ENCODE measurements at regions of chr1 and their contacts with region 1.

Region 1: DNA sequence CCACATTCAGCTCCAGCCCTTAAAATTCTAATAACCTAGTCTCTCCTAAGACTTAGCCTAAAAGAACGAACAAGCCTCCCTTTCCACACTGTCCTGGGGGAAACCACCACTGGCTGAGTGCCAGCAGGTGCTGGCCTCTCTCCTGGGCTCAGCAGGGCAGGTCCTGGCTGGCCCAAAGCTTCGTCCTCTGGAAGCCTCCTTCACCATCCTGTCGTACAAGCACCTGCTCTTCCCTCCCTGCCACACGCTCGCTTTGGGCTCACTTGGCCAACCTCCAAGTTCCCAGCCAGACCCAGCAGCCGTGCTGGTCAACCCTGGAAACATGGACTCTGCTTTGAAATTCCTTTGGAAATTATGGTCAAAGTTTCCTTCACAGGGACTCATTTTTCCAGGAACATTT is 58.2 kb upstream of the SLC25A33 start:
- DNase-seq: peak; percentile 27
- H3K4me3 ChIP-seq: no peak overlapping the region
- H3K27ac ChIP-seq: no peak overlapping the region
- H3K4me1 ChIP-seq: peaks cover 19% of the 10 kb centered on the region
- H3K27me3 ChIP-seq: no peaks in the 10 kb centered on the region
- CTCF ChIP-seq: no peak

Region 2: GRCh38 chr1:9376886-9377333 is 104.1 kb before region 1 on chr1:
- CTCF ChIA-PET with region 1: no interaction called
- dilution Hi-C with region 1: loop called (anchors 5 kb)
- in situ Hi-C with region 1: no loop called
- intact Hi-C with region 1: no loop called
- DNase-seq: no peak
- H3K4me3 ChIP-seq: no peak overlapping the region
- H3K27ac ChIP-seq: no peak overlapping the region
- H3K4me1 ChIP-seq: no peaks in the 10 kb centered on the region
- H3K27me3 ChIP-seq: no peaks in the 10 kb centered on the region
- CTCF ChIP-seq: no peak

Region 3: GRCh38 chr1:9438431-9439073 is 42.5 kb before region 1 on chr1:
- CTCF ChIA-PET with region 1: no interaction called
- dilution Hi-C with region 1: loop called (anchors 5 kb)
- in situ Hi-C with region 1: no loop called
- intact Hi-C with region 1: no loop called
- DNase-seq: peak; percentile 93
- H3K4me3 ChIP-seq: no peak overlapping the region
- H3K27ac ChIP-seq: peak overlapping the region; percentile 69
- H3K4me1 ChIP-seq: peaks cover 61% of the 10 kb centered on the region
- H3K27me3 ChIP-seq: no peaks in the 10 kb centered on the region
- CTCF ChIP-seq: no peak

Region 4: DNA sequence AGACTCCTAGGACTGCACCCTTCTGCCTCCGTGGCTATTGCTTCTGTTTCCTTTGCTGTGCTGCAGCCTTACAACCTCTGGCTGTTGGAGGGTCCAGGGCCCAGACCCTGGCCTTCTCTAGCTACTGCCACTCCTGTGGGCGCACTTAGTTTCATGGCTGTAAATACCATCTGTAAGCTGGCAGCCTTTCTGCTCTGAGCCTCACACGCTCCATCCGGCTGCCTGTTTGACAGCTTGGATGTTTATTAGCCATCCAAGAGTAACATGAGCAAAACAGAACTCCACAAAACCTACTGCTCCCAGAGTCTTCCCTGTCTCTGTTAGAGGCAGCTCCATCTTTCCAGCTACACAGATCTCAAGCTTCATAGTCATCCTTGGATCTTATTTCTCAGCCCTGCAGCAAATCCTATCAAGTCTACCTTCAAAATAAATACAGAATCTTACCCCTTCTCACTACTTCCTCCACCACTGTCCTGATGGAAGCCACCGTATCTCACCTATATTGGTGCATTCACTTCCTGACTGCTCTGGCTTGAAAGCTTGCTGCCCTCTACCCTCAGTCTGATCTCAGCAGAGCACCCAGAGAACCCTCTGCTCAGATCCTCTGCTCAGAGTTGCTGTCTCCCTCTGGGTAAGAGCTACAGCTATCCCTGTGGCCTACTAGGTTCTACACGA is 77.4 kb after region 1 on chr1:
- CTCF ChIA-PET with region 1: no interaction called
- dilution Hi-C with region 1: loop called (anchors 5 kb)
- in situ Hi-C with region 1: no loop called
- intact Hi-C with region 1: no loop called
- DNase-seq: no peak
- H3K4me3 ChIP-seq: no peak overlapping the region
- H3K27ac ChIP-seq: no peak overlapping the region
- H3K4me1 ChIP-seq: peaks cover 4% of the 10 kb centered on the region
- H3K27me3 ChIP-seq: no peaks in the 10 kb centered on the region
- CTCF ChIP-seq: no peak